Panc1 (cell line): ENCODE measurements at regions of chr16 and their contacts with region 1.

Region 1: GRCh38 chr16:55480228-55480661 is 1.2 kb downstream of the MMP2 start:
- DNase-seq: no peak
- ATAC-seq: peak; percentile 58
- H3K4me3 ChIP-seq: peak overlapping the region; percentile 71 to 79
- H3K27ac ChIP-seq: peak overlapping the region; percentile 87
- H3K4me1 ChIP-seq: peaks cover 35% of the 10 kb centered on the region
- H3K27me3 ChIP-seq: no peaks in the 10 kb centered on the region
- CTCF ChIP-seq: no peak

Region 2: DNA sequence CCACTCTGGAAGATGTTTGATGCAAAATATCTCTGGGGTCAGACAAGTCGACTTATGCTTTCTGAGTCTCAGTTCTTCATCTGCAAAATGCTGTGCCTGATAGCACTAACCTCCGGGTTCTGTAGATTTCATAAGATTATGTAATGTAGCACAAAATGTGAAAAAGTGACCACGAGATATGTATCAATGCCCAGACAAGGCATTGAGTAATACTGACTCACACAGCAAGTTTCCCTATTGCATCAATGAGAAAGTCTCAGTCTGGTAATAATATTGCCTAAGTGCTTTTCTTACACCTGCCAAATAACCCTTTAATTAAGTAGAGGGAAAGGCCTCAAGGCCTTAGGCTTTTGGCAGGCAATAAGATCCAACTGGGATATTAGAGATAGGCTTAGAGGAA is 42.6 kb before region 1 on chr16:
- CTCF ChIA-PET with region 1: no interaction called
- POLR2A ChIA-PET with region 1: no interaction called
- in situ Hi-C with region 1: no loop called
- intact Hi-C with region 1: no loop called
- DNase-seq: no peak
- ATAC-seq: no peak
- H3K4me3 ChIP-seq: no peak overlapping the region
- H3K27ac ChIP-seq: no peak overlapping the region
- H3K4me1 ChIP-seq: no peaks in the 10 kb centered on the region
- H3K27me3 ChIP-seq: peaks cover 2% of the 10 kb centered on the region
- CTCF ChIP-seq: no peak

Region 3: GRCh38 chr16:55502801-55503366 is 22.6 kb after region 1 on chr16:
- CTCF ChIA-PET with region 1: no interaction called
- POLR2A ChIA-PET with region 1: no interaction called
- in situ Hi-C with region 1: no loop called
- intact Hi-C with region 1: loop called (anchors 2 kb)
- DNase-seq: no peak
- ATAC-seq: peak; percentile 86
- H3K4me3 ChIP-seq: no peak overlapping the region
- H3K27ac ChIP-seq: peak overlapping the region; percentile 86
- H3K4me1 ChIP-seq: peaks cover 63% of the 10 kb centered on the region
- H3K27me3 ChIP-seq: no peaks in the 10 kb centered on the region
- CTCF ChIP-seq: no peak

Region 4: DNA sequence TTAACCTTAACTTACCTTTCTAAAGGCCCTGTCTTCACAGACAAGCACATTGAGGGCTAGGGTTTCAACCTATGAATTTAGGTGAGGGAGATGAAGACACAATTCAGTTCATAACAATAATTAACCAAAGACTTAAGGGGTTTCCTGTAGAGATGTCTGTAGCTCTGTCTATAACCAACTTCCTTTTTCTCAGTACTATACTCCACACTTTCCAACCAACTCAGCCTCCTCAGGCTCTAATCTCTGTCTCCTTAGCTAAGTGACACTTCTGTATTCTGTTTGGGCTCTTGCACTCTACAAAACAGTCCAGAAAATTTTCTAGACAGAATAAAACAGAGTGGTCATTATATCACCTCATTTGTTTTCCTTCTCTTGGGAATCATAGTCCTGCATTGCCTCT is 112.1 kb after region 1 on chr16:
- CTCF ChIA-PET with region 1: no interaction called
- POLR2A ChIA-PET with region 1: no interaction called
- in situ Hi-C with region 1: no loop called
- intact Hi-C with region 1: no loop called
- DNase-seq: no peak
- ATAC-seq: no peak
- H3K4me3 ChIP-seq: no peak overlapping the region
- H3K27ac ChIP-seq: no peak overlapping the region
- H3K4me1 ChIP-seq: no peaks in the 10 kb centered on the region
- H3K27me3 ChIP-seq: no peaks in the 10 kb centered on the region
- CTCF ChIP-seq: no peak